ENCODE measurements at regions of chr19 and their contacts with region 1.

Region 1: GRCh38 chr19:36182612-36183244 is 30.5 kb upstream of the COX7A1 start:
- DNase-seq: no peak
- ATAC-seq: peak; percentile 68
- H3K4me3 ChIP-seq: no peak overlapping the region
- H3K27ac ChIP-seq: no peak overlapping the region
- H3K4me1 ChIP-seq: no peaks in the 10 kb centered on the region
- H3K27me3 ChIP-seq: no peaks in the 10 kb centered on the region
- CTCF ChIP-seq: no peak

Region 2: DNA sequence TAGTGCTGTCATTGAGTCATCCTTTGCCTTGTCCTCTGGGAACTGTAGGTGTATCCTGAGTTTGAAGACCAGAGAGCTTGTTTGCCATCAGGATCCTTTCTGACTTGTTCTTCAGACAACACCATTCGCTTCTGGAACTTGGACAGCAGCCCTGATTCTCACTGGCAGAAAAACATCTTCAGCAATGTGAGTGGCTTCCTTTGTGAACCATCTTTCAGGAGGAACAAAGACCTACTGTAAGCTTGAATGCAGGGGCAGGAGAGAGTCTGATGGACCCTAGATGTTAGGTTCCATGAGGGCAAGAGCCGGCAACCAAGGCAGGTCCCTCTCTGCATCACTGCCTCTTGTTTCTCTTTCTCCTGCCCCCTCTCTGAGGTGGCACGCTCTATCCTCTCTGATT is 101.3 kb before region 1 on chr19:
- CTCF ChIA-PET with region 1: no interaction called
- POLR2A ChIA-PET with region 1: no interaction called
- in situ Hi-C with region 1: no loop called
- intact Hi-C with region 1: no loop called
- DNase-seq: no peak
- ATAC-seq: no peak
- H3K4me3 ChIP-seq: no peak overlapping the region
- H3K27ac ChIP-seq: no peak overlapping the region
- H3K4me1 ChIP-seq: no peaks in the 10 kb centered on the region
- H3K27me3 ChIP-seq: no peaks in the 10 kb centered on the region
- CTCF ChIP-seq: no peak

Region 3: GRCh38 chr19:36132489-36132891 is 50.2 kb before region 1 on chr19:
- CTCF ChIA-PET with region 1: interaction called, 5 read pairs
- POLR2A ChIA-PET with region 1: interaction called, 12 read pairs
- in situ Hi-C with region 1: no loop called
- intact Hi-C with region 1: no loop called
- DNase-seq: peak; percentile 72
- ATAC-seq: peak; percentile 71
- H3K4me3 ChIP-seq: no peak overlapping the region
- H3K27ac ChIP-seq: peak overlapping the region; percentile 57
- H3K4me1 ChIP-seq: peaks cover 32% of the 10 kb centered on the region
- H3K27me3 ChIP-seq: no peaks in the 10 kb centered on the region
- CTCF ChIP-seq: no peak

Region 4: DNA sequence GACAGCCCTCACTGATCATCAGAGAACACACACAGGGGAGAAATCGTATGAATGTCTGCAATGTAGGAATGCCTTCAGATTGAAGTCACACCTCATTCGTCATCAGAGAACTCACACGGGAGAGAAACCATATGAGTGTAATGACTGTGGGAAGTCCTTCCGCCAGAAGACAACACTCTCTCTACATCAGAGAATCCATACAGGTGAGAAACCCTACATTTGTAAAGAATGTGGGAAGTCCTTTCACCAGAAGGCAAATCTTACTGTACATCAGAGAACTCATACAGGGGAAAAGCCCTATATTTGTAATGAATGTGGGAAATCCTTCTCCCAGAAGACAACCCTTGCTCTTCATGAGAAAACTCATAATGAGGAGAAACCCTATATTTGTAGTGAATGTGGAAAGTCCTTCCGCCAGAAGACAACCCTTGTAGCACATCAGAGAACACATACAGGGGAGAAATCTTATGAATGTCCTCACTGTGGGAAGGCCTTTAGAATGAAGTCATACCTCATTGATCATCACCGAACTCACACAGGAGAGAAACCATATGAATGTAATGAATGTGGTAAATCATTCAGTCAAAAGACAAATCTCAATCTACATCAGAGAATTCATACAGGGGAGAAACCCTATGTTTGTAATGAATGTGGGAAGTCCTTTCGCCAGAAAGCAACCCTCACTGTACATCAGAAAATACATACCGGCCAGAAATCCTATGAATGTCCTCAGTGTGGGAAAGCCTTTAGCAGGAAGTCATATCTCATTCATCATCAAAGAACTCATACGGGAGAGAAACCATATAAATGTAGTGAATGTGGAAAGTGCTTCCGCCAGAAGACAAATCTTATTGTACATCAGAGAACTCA is 537.2 kb after region 1 on chr19:
- CTCF ChIA-PET with region 1: no interaction called
- POLR2A ChIA-PET with region 1: interaction called, 11 read pairs
- in situ Hi-C with region 1: no loop called
- intact Hi-C with region 1: no loop called
- DNase-seq: no peak
- ATAC-seq: no peak
- H3K4me3 ChIP-seq: no peak overlapping the region
- H3K27ac ChIP-seq: no peak overlapping the region
- H3K4me1 ChIP-seq: no peaks in the 10 kb centered on the region
- H3K27me3 ChIP-seq: no peaks in the 10 kb centered on the region
- CTCF ChIP-seq: no peak

Region 5: GRCh38 chr19:36772311-36773222 is 589.8 kb after region 1 on chr19 and contains the start of gene ZNF850:
- CTCF ChIA-PET with region 1: interaction called, 11 read pairs
- POLR2A ChIA-PET with region 1: no interaction called
- in situ Hi-C with region 1: no loop called
- intact Hi-C with region 1: no loop called
- DNase-seq: peak; percentile 93
- ATAC-seq: peak; percentile 97
- H3K4me3 ChIP-seq: peak within 1 kb of the TSS; percentile 58 to 80
- H3K27ac ChIP-seq: peak within 1 kb of the TSS; percentile 97
- H3K4me1 ChIP-seq: no peaks in the 10 kb centered on the region
- H3K27me3 ChIP-seq: no peaks in the 10 kb centered on the region
- CTCF ChIP-seq: no peak
- total RNA-seq, gene ZNF850: 15.3 TPM

Measured in Panc1 (cell line).